SK-N-SH (cell line): ENCODE measurements at regions of chr13 and their contacts with region 1.

Region 1: GRCh38 chr13:96020155-96020575 is 33.0 kb downstream of the UGGT2 start:
- DNase-seq: peak; percentile 56
- H3K4me3 ChIP-seq: no peak overlapping the region; a peak in 1 of 4 replicates
- H3K27ac ChIP-seq: no peak overlapping the region; a peak in 1 of 4 replicates
- H3K4me1 ChIP-seq: no peaks in the 10 kb centered on the region
- H3K27me3 ChIP-seq: no peaks in the 10 kb centered on the region
- CTCF ChIP-seq: peak; percentile 69
- EP300 ChIP-seq: no peak
- RAD21 ChIP-seq: peak; percentile 91

Region 2: DNA sequence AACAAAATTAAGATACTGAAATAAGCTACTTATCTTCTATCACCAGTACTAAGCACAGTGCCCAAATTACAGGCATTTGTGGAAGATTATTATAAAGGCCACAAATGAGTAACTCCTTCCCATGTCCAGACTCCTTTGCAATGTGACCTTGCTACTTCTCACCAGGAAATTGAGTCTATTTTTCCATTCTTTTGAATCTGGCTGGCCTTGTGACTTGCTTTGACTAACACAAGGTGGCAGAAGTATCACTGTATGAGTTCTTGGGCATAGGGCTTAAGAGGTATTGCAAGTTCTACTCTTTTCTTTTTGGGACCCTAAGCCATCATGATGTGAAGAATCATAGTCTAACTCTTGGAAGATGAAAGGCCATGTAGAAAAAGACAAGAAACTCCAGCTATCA is 16.9 kb before region 1 on chr13:
- CTCF ChIA-PET with region 1: interaction called, 10 read pairs
- POLR2A ChIA-PET with region 1: no interaction called
- DNase-seq: no peak
- H3K4me3 ChIP-seq: no peak overlapping the region
- H3K27ac ChIP-seq: no peak overlapping the region
- H3K4me1 ChIP-seq: no peaks in the 10 kb centered on the region
- H3K27me3 ChIP-seq: no peaks in the 10 kb centered on the region
- CTCF ChIP-seq: peak; percentile 19; the same call in 1 of the 2 replicates
- EP300 ChIP-seq: no peak
- RAD21 ChIP-seq: 0 out of 2 replicates have a peak, but pooled peaks have one; percentile 16

Region 3: DNA sequence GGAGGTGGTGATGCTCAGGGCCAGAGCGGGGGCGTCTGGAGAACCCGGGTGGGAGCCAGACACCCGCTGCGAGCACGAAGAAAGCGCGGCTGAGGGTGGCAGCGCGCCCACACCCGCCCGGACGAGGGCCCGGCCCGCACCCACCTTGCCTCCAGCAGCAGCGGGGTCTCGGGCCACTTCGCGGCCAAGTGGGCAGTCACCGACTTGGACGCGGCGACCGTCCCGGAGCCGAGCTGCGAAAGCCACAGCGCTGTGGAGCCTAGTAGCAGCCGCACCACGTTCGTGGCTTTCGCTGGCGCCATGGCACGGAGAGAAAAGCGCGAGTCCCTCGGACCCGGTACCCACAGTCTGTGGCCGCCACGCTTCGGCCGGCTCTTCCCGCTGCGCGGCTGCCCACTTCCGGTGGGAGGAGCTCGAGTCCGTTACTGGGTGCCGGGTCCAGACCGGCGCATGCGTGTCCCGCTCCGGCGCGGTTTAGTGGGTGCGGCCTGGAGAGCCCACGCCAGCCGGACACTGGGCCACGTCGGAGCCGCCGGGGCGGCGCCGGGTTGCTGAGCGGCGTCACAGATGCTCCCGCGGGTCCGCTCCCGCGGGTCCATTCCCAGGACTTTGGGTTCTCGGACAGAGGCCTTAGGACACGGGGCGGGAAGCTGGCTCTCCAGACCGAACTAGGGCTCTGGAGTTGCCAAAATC is 33.0 kb after region 1 on chr13 and contains the start of gene UGGT2:
- CTCF ChIA-PET with region 1: interaction called, 11 read pairs
- POLR2A ChIA-PET with region 1: no interaction called
- DNase-seq: peak; percentile 99
- H3K4me3 ChIP-seq: peak within 1 kb of the TSS; percentile 74 to 98
- H3K27ac ChIP-seq: peak within 1 kb of the TSS; percentile 68 to 85
- H3K4me1 ChIP-seq: peaks cover 0 to 3% of the 10 kb centered on the region in 2 experiments; a peak in 2 of 4 replicates
- H3K27me3 ChIP-seq: no peaks in the 10 kb centered on the region
- CTCF ChIP-seq: no peak
- EP300 ChIP-seq: no peak
- RAD21 ChIP-seq: no peak
- polyA plus RNA-seq, gene UGGT2: 13.3 and 20.2 TPM in 2 replicates

Region 4: DNA sequence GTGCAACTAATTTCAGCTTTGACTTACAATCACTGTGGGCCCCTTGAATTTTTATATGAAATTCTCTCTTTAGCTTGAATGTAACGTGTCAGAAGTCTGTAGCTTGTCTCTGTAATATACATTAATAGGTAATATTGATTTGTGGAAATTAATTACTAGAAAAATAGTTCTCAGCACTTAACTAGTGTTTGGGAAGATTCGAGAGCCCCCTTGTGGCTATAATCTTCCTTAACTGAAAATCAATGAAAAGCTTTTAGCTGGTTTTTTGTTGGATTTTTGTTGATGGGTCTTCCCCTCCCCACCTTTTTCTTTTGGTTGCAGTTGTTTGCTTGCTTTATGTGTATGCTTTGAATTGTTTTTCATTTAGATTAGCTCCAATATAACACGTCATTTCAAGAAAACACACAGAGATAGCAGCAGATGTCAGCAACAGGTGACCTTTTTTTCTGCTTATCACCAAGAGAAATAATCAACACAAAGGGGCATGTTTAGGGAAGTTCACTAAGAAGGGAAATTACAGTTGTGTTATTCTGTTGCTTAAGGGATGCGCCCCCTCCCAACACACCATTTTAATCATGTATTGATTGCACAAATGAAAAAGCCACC is 797.3 kb after region 1 on chr13:
- CTCF ChIA-PET with region 1: interaction called, 57 read pairs
- POLR2A ChIA-PET with region 1: no interaction called
- DNase-seq: peak; percentile 14
- H3K4me3 ChIP-seq: no peak overlapping the region
- H3K27ac ChIP-seq: no peak overlapping the region
- H3K4me1 ChIP-seq: peaks cover 0 to 3% of the 10 kb centered on the region in 2 experiments; a peak in 1 of 4 replicates
- H3K27me3 ChIP-seq: no peaks in the 10 kb centered on the region
- CTCF ChIP-seq: peak; percentile 66
- EP300 ChIP-seq: no peak
- RAD21 ChIP-seq: peak; percentile 78

Region 5: GRCh38 chr13:96958286-96958891 is 938.2 kb after region 1 on chr13:
- CTCF ChIA-PET with region 1: interaction called, 19 read pairs
- POLR2A ChIA-PET with region 1: no interaction called
- DNase-seq: peak; percentile 30
- H3K4me3 ChIP-seq: peak overlapping the region in 1 of 2 experiments; percentile 34; a peak in 1 of 4 replicates
- H3K27ac ChIP-seq: no peak overlapping the region
- H3K4me1 ChIP-seq: no peaks in the 10 kb centered on the region
- H3K27me3 ChIP-seq: no peaks in the 10 kb centered on the region
- CTCF ChIP-seq: peak; percentile 84
- EP300 ChIP-seq: no peak
- RAD21 ChIP-seq: peak; percentile 66